HepG2 (cell line): ENCODE measurements at regions of chr9 and their contacts with region 1.

Region 1: GRCh38 chr9:129177791-129178559 is at the start of gene IER5L:
- DNase-seq: peak; percentile 90
- ATAC-seq: peak; percentile 77
- H3K4me3 ChIP-seq: peak within 1 kb of the TSS; percentile 83 to 94 (median 93)
- H3K27ac ChIP-seq: peak within 1 kb of the TSS; percentile 82
- H3K4me1 ChIP-seq: peaks cover 62% of the 10 kb centered on the region
- H3K27me3 ChIP-seq: peaks cover 6 to 36% of the 10 kb centered on the region in 2 experiments
- CTCF ChIP-seq: 0 out of 2 replicates have a peak, but pooled peaks have one; percentile 10
- EP300 ChIP-seq: 0 out of 4 replicates have a peak, but pooled peaks of 1 of the 2 experiments have one; percentile 3
- POLR2A ChIP-seq: peak in 1 of 2 experiments; percentile 98; a peak in 2 of 4 replicates
- RAD21 ChIP-seq: no peak
- total RNA-seq, gene IER5L: 2.5 and 3.3 TPM in 2 replicates

Region 2: DNA sequence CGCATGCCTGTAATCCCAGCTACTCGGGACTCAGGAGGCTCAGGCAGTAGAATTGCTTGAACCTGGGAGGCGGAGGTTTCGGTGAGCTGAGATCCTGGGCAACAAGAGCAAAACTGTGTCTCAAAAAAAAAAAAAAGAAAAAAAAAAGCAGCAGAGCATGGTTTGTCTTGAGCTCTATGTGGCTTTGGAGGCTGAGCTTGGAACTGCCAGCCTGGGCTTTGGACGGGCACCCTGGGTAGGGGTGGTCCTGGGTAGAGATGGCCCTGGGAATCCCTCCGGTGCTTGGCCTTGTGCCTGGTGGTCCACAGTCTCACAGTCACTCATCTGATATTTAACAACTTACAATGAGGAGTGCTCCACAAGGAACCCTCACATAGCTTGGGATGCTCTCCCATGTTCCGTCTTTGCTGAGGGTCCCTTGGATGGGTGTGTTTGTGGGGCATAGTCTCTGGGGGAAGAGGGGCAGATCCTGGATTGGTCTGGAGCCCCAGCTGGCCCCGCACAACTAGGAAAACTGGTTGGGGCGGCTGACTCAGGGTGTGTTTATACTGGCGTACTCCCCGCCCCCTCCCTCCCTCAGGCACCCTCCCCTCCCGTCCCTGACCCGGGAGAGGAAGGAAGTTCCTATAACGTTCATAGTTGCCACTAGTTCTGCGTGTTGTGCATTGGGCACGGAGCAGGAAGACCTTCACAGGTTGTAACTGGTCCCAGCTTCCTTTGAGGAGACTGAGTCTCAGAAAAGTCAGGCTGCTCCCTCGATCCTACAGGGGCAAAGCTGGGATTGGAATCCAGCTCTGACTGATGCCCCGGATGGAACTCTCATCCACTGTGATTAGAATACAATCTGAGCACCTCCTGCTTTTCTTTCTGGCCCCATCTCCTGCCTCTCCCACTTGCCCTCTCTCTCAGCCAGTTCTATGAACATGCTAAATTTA is 11.1 kb before region 1 on chr9:
- CTCF ChIA-PET with region 1: no interaction called
- POLR2A ChIA-PET with region 1: interaction called, 21 read pairs
- in situ Hi-C with region 1: no loop called
- intact Hi-C with region 1: no loop called
- DNase-seq: peak; percentile 58
- ATAC-seq: peak; percentile 66
- H3K4me3 ChIP-seq: peak overlapping the region; percentile 32 to 50 (median 47); a peak in 5 of 6 replicates
- H3K27ac ChIP-seq: no peak overlapping the region
- H3K4me1 ChIP-seq: peaks cover 82% of the 10 kb centered on the region
- H3K27me3 ChIP-seq: peaks cover under 1 to 11% of the 10 kb centered on the region in 2 experiments; a peak in 4 of 5 replicates
- CTCF ChIP-seq: no peak
- EP300 ChIP-seq: no peak
- POLR2A ChIP-seq: no peak
- RAD21 ChIP-seq: no peak

Region 3: GRCh38 chr9:129242941-129243561 is 65.1 kb after region 1 on chr9:
- CTCF ChIA-PET with region 1: no interaction called
- POLR2A ChIA-PET with region 1: no interaction called
- in situ Hi-C with region 1: no loop called
- intact Hi-C with region 1: no loop called
- DNase-seq: no peak
- ATAC-seq: no peak; the same call in 2 of the 3 replicates
- H3K4me3 ChIP-seq: no peak overlapping the region
- H3K27ac ChIP-seq: no peak overlapping the region
- H3K4me1 ChIP-seq: no peaks in the 10 kb centered on the region
- H3K27me3 ChIP-seq: peaks cover 3 to 41% of the 10 kb centered on the region in 2 experiments; a peak in 4 of 5 replicates
- CTCF ChIP-seq: no peak
- EP300 ChIP-seq: no peak
- POLR2A ChIP-seq: no peak
- RAD21 ChIP-seq: no peak

Region 4: GRCh38 chr9:129343424-129344375 is 165.7 kb after region 1 on chr9:
- CTCF ChIA-PET with region 1: no interaction called
- POLR2A ChIA-PET with region 1: interaction called, 8 read pairs
- in situ Hi-C with region 1: no loop called
- intact Hi-C with region 1: loop called (anchors 10 kb)
- DNase-seq: peak; percentile 97
- ATAC-seq: peak; percentile 99
- H3K4me3 ChIP-seq: peak overlapping the region in 2 of 3 experiments; percentile 22 to 47; a peak in 3 of 6 replicates
- H3K27ac ChIP-seq: peak overlapping the region; percentile 91
- H3K4me1 ChIP-seq: peaks cover 86% of the 10 kb centered on the region
- H3K27me3 ChIP-seq: no peaks in the 10 kb centered on the region
- CTCF ChIP-seq: peak; percentile 67
- EP300 ChIP-seq: peak; percentile 52 to 94; a peak in 3 of 4 replicates
- POLR2A ChIP-seq: peak in 1 of 2 experiments; percentile 70; a peak in 1 of 4 replicates
- RAD21 ChIP-seq: peak; percentile 64; the same call in 1 of the 2 replicates

Region 5: DNA sequence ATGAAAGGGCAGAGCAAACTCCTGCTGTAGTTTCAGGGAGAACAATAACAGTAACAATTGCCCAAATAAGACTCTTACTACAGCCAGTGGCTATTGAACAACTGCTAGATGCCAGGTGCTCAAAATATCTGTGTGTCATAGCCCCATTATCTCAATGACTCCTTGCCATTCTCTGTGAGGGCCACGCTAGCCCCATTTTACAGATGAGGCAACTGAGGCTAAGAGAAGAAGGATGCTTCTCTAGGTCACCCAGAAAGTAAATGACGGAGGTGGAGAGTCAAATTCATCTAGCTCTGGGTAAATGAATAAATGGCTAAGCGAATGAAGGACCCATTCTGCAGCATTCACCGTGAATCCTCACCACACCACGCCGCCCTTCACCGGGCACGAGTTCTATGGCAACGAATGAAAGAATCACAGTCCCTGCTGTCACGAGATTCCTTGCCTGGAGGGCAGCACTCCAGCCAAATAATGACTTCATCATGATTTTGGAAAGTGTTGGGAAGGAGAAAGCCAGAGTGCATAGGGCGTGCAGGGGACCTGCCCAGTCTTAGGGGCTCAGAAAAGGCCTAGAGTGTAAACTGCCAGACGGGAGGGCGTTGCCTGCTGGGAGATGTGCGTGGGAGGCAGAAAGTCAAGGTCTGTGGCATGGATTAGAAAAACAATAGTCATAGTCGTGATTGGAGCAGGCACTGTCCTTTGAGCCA is 295.7 kb after region 1 on chr9:
- CTCF ChIA-PET with region 1: no interaction called
- POLR2A ChIA-PET with region 1: interaction called, 3 read pairs
- in situ Hi-C with region 1: loop called (anchors 10 kb)
- intact Hi-C with region 1: no loop called
- DNase-seq: no peak
- ATAC-seq: no peak
- H3K4me3 ChIP-seq: no peak overlapping the region
- H3K27ac ChIP-seq: no peak overlapping the region
- H3K4me1 ChIP-seq: peaks cover 78% of the 10 kb centered on the region
- H3K27me3 ChIP-seq: 0 out of 5 replicates have a peak, but pooled peaks cover 0 to 4% of the 10 kb centered on the region in 2 experiments
- CTCF ChIP-seq: no peak
- EP300 ChIP-seq: no peak
- POLR2A ChIP-seq: no peak
- RAD21 ChIP-seq: no peak

Region 6: GRCh38 chr9:129487642-129488409 is 309.9 kb after region 1 on chr9:
- CTCF ChIA-PET with region 1: no interaction called
- POLR2A ChIA-PET with region 1: interaction called, 10 read pairs
- in situ Hi-C with region 1: no loop called
- intact Hi-C with region 1: loop called (anchors 10 kb)
- DNase-seq: no peak
- ATAC-seq: peak; percentile 14
- H3K4me3 ChIP-seq: peak overlapping the region; percentile 68 to 86 (median 72); a peak in 5 of 6 replicates
- H3K27ac ChIP-seq: peak overlapping the region; percentile 91
- H3K4me1 ChIP-seq: peaks cover 87% of the 10 kb centered on the region
- H3K27me3 ChIP-seq: no peaks in the 10 kb centered on the region; a peak in 1 of 5 replicates
- CTCF ChIP-seq: no peak
- EP300 ChIP-seq: no peak
- POLR2A ChIP-seq: peak in 1 of 2 experiments; percentile 41; a peak in 1 of 4 replicates
- RAD21 ChIP-seq: no peak; the same call in 1 of the 2 replicates

Region 7: GRCh38 chr9:129610473-129611301 is 432.7 kb after region 1 on chr9:
- CTCF ChIA-PET with region 1: interaction called, 9 read pairs
- POLR2A ChIA-PET with region 1: interaction called, 10 read pairs
- in situ Hi-C with region 1: loop called (anchors 10 kb)
- intact Hi-C with region 1: no loop called
- DNase-seq: peak; percentile 48
- ATAC-seq: peak; percentile 57
- H3K4me3 ChIP-seq: peak overlapping the region; percentile 69 to 87 (median 81)
- H3K27ac ChIP-seq: peak overlapping the region; percentile 58
- H3K4me1 ChIP-seq: peaks cover 62% of the 10 kb centered on the region
- H3K27me3 ChIP-seq: no peaks in the 10 kb centered on the region
- CTCF ChIP-seq: peak; percentile 81
- EP300 ChIP-seq: no peak
- POLR2A ChIP-seq: no peak
- RAD21 ChIP-seq: peak; percentile 100